PC-3 (cell line): ENCODE measurements at regions of chr13 and their contacts with region 1.

Region 1: DNA sequence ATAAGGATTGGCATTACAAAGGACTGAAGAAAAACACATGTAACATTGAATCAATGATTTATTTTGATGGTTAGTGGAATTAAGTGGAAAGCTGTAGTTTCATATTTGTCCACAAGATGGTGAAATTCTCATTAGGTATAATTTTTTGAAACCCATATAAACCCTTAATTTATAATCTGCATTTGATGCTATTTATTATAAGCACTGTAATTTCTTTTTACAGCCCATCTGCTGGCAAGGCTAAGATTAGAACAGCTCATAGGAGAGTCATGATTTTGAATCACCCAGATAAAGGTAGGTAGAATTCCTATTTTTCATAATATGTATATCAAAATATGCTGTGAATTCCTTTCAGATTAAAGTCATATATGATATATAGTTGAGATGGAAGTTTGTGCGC is 62.2 kb downstream of the DNAJC15 start:
- DNase-seq: peak; percentile 67
- ATAC-seq: peak; percentile 49; the same call in 1 of the 2 replicates
- H3K4me3 ChIP-seq: no peak overlapping the region
- H3K27ac ChIP-seq: no peak overlapping the region
- H3K4me1 ChIP-seq: peaks cover 5% of the 10 kb centered on the region; the same call in 1 of the 2 replicates
- H3K27me3 ChIP-seq: no peaks in the 10 kb centered on the region
- CTCF ChIP-seq: peak; percentile 62

Region 2: DNA sequence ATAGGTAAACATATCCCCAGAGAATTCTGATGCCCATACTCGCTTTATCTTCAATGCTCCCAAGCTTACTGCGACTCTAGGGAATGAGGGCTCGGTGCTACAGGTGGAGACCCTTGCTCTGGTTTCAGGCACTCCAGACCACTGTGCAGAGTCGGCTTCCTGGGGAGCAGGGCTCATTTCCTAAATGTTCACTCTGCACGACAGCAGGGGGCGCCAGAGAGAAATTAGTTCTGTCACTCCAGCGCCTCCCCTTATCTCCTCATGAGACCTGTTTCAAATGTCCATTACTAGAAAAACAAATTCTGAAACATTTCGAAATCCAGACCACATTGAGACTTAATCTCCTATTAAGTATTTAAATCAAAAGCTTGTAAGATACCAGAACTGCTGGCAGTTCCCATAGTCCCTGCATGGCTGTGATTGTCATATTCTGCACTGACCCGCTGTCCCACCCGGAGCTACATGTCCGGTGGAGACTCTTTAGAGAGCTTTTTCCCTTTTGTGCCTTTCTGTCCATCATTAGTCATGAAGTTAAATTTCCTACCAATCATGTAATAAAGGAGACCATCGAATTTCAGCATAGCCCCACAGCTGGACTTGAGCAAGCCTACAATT is 115.9 kb before region 1 on chr13:
- CTCF ChIA-PET with region 1: no interaction called
- POLR2A ChIA-PET with region 1: no interaction called
- intact Hi-C with region 1: loop called (anchors 2 kb)
- DNase-seq: peak; percentile 65
- ATAC-seq: peak; percentile 86
- H3K4me3 ChIP-seq: no peak overlapping the region
- H3K27ac ChIP-seq: no peak overlapping the region
- H3K4me1 ChIP-seq: peaks cover 5% of the 10 kb centered on the region; the same call in 1 of the 2 replicates
- H3K27me3 ChIP-seq: no peaks in the 10 kb centered on the region
- CTCF ChIP-seq: peak; percentile 70

Region 3: GRCh38 chr13:43303033-43303729 is 217.6 kb after region 1 on chr13:
- CTCF ChIA-PET with region 1: no interaction called
- POLR2A ChIA-PET with region 1: no interaction called
- intact Hi-C with region 1: loop called (anchors 2 kb)
- DNase-seq: peak; percentile 50
- ATAC-seq: peak; percentile 59
- H3K4me3 ChIP-seq: no peak overlapping the region
- H3K27ac ChIP-seq: no peak overlapping the region
- H3K4me1 ChIP-seq: peaks cover 14% of the 10 kb centered on the region; the same call in 1 of the 2 replicates
- H3K27me3 ChIP-seq: no peaks in the 10 kb centered on the region
- CTCF ChIP-seq: peak; percentile 56

Region 4: GRCh38 chr13:43792076-43792881 is 706.7 kb after region 1 on chr13:
- CTCF ChIA-PET with region 1: no interaction called
- POLR2A ChIA-PET with region 1: no interaction called
- intact Hi-C with region 1: loop called (anchors 2 kb)
- DNase-seq: peak; percentile 10
- ATAC-seq: peak; percentile 59
- H3K4me3 ChIP-seq: no peak overlapping the region
- H3K27ac ChIP-seq: no peak overlapping the region
- H3K4me1 ChIP-seq: peaks cover 7% of the 10 kb centered on the region; the same call in 1 of the 2 replicates
- H3K27me3 ChIP-seq: no peaks in the 10 kb centered on the region
- CTCF ChIP-seq: no peak

Region 5: GRCh38 chr13:43878892-43879754 is 793.6 kb after region 1 on chr13 and contains the start of gene CCDC122:
- CTCF ChIA-PET with region 1: no interaction called
- POLR2A ChIA-PET with region 1: no interaction called
- intact Hi-C with region 1: loop called (anchors 5 kb)
- DNase-seq: peak; percentile 70
- ATAC-seq: peak; percentile 74
- H3K4me3 ChIP-seq: peak within 1 kb of the TSS; percentile 70
- H3K27ac ChIP-seq: peak within 1 kb of the TSS; percentile 76
- H3K4me1 ChIP-seq: peaks cover 45% of the 10 kb centered on the region
- H3K27me3 ChIP-seq: no peaks in the 10 kb centered on the region
- CTCF ChIP-seq: no peak
- total RNA-seq, gene CCDC122: 4.6 TPM in 2 replicates